Transverse colon (tissue), 4 donors: ENCODE measurements at regions of chr18 and their contacts with region 1.

Region 1: GRCh38 chr18:62186774-62187542 is at the starts of genes PIGN and RELCH:
- DNase-seq: peak; percentile 96
- H3K4me3 ChIP-seq: peak within 1 kb of the TSS; percentile 83 to 91 (median 86)
- H3K27ac ChIP-seq: peak within 1 kb of the TSS; percentile 86 to 94 (median 91)
- H3K4me1 ChIP-seq: peaks cover 8 to 49% (median 25%) of the 10 kb centered on the region in 4 donors
- H3K27me3 ChIP-seq: no peaks in the 10 kb centered on the region
- CTCF ChIP-seq: no peak
- EP300 ChIP-seq: no peak
- POLR2A ChIP-seq: peak; percentile 95
- total RNA-seq, gene PIGN: 15.3 to 105 (median 42.3) TPM
- total RNA-seq, gene RELCH: 37.0 to 117 (median 68.7) TPM

Region 2: GRCh38 chr18:62249478-62250097 is 62.6 kb after region 1 on chr18:
- in situ Hi-C with region 1: loop called (anchors 5 to 10 kb)
- intact Hi-C with region 1: loop called (anchors 10 kb)
- DNase-seq: peak; percentile 80
- H3K4me3 ChIP-seq: no peak overlapping the region
- H3K27ac ChIP-seq: no peak overlapping the region
- H3K4me1 ChIP-seq: no peaks in the 10 kb centered on the region
- H3K27me3 ChIP-seq: no peaks in the 10 kb centered on the region
- CTCF ChIP-seq: peak; percentile 75 to 85 (median 84)
- EP300 ChIP-seq: no peak
- POLR2A ChIP-seq: no peak

Region 3: DNA sequence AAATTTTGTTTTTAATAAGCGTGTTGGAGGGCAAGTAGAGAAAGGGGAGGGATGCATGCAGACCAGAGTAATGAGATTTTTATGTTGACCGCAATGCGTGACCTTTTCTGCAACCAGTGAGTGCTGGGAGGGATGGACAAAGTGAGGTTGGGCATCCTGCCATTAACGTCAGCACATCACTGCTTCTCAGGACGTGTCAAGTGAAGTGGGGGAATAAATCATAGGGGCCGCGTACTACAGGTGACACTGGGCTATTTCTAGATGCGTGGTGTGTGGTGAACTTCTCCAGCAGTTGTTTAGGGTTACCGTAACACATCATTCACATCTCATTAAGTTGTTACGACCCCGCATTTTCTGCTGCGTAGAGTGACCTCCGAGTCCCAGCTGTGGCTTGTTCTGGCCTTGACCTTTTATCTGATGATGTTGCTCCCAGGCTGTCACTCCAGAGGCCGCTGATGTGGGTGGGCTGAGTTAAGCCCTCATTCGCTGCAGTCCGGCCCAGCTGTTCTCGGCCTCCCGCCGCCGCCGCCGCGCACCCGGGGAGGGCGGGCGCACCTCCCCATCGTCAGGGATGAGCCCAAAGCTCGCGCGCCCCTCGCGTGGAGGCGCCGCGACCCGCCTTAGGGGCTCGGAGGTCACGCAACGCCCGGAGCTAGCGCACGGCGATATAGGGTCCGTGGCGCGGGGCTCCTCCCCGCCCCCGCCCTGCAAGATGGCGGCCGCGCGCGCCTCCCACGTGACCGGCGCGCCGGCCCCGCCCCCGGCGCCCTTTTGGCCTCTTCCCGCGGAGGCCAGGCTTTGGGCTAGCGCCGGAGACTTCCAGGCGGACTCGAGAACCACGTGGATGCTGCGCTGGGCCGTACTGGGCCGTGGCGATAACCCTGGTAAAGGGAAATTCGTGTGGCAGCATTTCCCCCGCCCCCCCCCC is 339.4 kb after region 1 on chr18:
- in situ Hi-C with region 1: loop called in 1 of 4 experiments (anchors 25 kb)
- intact Hi-C with region 1: no loop called
- DNase-seq: peak; percentile 84
- H3K4me3 ChIP-seq: peak overlapping the region; percentile 44 to 95 (median 80)
- H3K27ac ChIP-seq: peak overlapping the region; percentile 92 to 99 (median 98)
- H3K4me1 ChIP-seq: peaks cover 7 to 37% (median 20%) of the 10 kb centered on the region in 4 donors
- H3K27me3 ChIP-seq: no peaks in the 10 kb centered on the region
- CTCF ChIP-seq: no peak
- EP300 ChIP-seq: no peak
- POLR2A ChIP-seq: peak; percentile 73

Region 4: GRCh38 chr18:62566199-62566598 is 379.2 kb after region 1 on chr18:
- in situ Hi-C with region 1: loop called in 1 of 4 experiments (anchors 25 kb)
- intact Hi-C with region 1: no loop called
- DNase-seq: peak; percentile 32
- H3K4me3 ChIP-seq: no peak overlapping the region
- H3K27ac ChIP-seq: no peak overlapping the region
- H3K4me1 ChIP-seq: no peaks in the 10 kb centered on the region
- H3K27me3 ChIP-seq: no peaks in the 10 kb centered on the region
- CTCF ChIP-seq: peak in 3 of 5 experiments; percentile 22 to 30 (median 25)
- EP300 ChIP-seq: no peak
- POLR2A ChIP-seq: no peak